Aorta (tissue), 5 donors: ENCODE measurements at regions of chr11 and their contacts with region 1.

Region 1: DNA sequence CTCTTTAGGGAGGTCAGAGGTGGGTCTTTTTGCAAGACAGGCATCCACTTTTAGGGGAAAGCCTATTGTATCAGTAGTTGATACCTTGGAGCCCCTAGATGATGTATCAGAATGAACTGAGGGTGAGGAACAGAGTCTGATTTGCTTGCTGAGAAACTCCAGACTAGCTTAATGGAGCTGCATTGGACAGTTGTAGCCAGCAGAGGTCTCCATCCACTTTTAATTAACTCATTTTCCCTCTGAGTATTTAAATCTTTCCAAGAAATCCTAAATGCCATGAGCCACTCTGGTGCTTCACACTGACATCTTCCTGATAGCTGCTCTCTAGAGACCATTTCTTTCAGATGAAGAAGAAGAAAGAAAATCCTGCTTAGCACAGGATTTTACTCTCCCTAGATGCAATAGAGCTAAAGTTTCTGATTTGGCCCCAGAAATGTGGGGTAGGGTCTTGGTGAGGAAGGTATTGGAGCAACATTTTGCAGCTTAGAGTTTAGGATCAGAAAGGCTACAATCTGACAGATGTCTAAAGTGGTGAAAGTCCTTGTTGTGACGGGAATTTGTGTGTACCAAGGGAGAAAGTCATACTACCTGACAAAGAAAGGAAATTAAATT is 38.0 kb downstream of the EXT2 start:
- DNase-seq: no peak
- ATAC-seq: peak; percentile 44
- H3K4me3 ChIP-seq: no peak overlapping the region
- H3K27ac ChIP-seq: no peak overlapping the region
- H3K4me1 ChIP-seq: no peaks in the 10 kb centered on the region
- H3K27me3 ChIP-seq: no peaks in the 10 kb centered on the region

Region 2: DNA sequence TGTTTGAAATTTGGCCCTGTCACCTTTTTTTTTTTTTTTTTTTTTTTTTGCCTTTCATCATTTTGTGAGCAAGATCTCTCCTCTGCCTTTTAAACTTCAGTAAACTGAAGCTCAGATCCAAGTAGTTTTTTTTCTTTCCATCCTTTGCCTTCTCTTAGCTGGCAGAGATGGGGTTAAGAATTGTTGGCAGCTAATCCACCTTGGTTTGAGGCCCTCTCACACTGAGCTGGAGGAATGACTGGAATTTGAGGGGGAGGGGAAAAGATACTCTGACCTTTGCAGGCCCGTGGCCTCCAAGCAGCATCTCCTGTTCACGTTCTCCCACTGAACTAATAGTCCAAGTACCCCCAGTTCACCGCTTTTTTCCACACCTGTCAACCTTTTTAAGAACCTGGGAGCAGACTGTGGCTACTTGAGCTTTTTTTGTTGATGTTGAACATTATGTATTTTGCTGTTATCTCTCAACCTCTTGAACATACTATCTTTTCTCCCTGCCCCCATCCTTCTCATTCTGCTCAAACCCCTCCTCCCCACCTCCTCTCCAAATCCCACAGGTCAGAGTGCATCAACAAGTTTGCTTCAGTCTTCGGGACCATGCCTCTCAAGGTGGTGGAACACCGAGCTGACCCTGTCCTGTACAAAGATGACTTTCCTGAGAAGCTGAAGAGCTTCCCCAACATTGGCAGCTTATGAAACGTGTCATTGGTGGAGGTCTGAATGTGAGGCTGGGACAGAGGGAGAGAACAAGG is 110.3 kb after region 1 on chr11:
- intact Hi-C with region 1: loop called in 1 of 2 experiments (anchors 10 kb)
- DNase-seq: no peak
- ATAC-seq: no peak
- H3K4me3 ChIP-seq: no peak overlapping the region
- H3K27ac ChIP-seq: no peak overlapping the region
- H3K4me1 ChIP-seq: peaks cover 0 to 7% of the 10 kb centered on the region in 2 donors
- H3K27me3 ChIP-seq: no peaks in the 10 kb centered on the region

Region 3: DNA sequence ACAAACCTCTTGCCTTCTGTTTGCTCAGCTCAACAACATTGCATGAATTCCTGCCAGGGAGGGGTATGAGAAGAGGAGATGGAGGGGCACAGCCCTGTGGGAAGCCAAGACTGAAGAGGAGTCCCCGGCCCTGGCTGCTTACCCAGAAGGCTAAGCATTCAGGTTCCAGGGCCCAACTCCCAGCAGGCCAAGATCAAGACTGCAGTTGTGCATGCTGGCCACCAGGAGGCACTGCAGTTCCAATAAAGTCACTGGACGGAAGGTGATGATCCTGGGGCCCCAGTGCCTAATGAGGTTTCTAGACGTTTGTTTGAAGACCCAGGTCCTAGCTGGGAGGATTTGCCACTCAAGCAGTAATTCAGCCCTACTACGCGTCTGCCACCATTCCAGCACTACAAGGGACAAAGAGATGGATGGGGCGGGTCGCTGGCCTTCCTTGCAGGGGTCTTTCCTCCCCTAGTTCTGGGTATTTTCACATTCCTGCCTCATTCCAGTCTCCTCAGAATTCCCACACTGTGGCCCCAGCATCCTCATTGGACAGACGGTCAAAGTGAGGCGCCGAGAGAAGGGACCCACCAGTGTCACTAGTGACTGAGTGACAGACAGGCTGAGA is 152.9 kb after region 1 on chr11:
- intact Hi-C with region 1: loop called in 1 of 2 experiments (anchors 10 kb)
- DNase-seq: peak in 1 of 2 donors; percentile 86
- ATAC-seq: peak; percentile 76
- H3K4me3 ChIP-seq: no peak overlapping the region
- H3K27ac ChIP-seq: no peak overlapping the region
- H3K4me1 ChIP-seq: no peaks in the 10 kb centered on the region
- H3K27me3 ChIP-seq: no peaks in the 10 kb centered on the region